ENCODE measurements at regions of chr6 and their contacts with region 1.

Region 1: GRCh38 chr6:52617087-52617486 is 40.2 kb upstream of the TRAM2 start:
- DNase-seq: no peak
- H3K4me3 ChIP-seq: no peak overlapping the region
- H3K27ac ChIP-seq: no peak overlapping the region
- H3K4me1 ChIP-seq: no peaks in the 10 kb centered on the region
- H3K27me3 ChIP-seq: no peaks in the 10 kb centered on the region
- CTCF ChIP-seq: no peak
- POLR2A ChIP-seq: no peak

Region 2: GRCh38 chr6:53410508-53411258 is 793.6 kb after region 1 on chr6:
- intact Hi-C with region 1: loop called (anchors 5 kb)
- DNase-seq: no peak
- H3K4me3 ChIP-seq: no peak overlapping the region
- H3K27ac ChIP-seq: no peak overlapping the region
- H3K4me1 ChIP-seq: no peaks in the 10 kb centered on the region
- H3K27me3 ChIP-seq: no peaks in the 10 kb centered on the region
- CTCF ChIP-seq: peak in 1 of 3 donors; percentile 22
- POLR2A ChIP-seq: no peak